BJ (cell line): ENCODE measurements at regions of chr18 and their contacts with region 1.

Region 1: GRCh38 chr18:54127759-54128378 is 96.6 kb downstream of the MBD2 start:
- DNase-seq: no peak
- H3K4me3 ChIP-seq: no peak overlapping the region
- H3K27me3 ChIP-seq: no peaks in the 10 kb centered on the region
- CTCF ChIP-seq: peak; percentile 68

Region 2: GRCh38 chr18:54112356-54112755 is 15.5 kb before region 1 on chr18:
- CTCF ChIA-PET with region 1: interaction called, 19 read pairs
- POLR2A ChIA-PET with region 1: no interaction called
- DNase-seq: peak; percentile 50
- H3K4me3 ChIP-seq: no peak overlapping the region
- H3K27me3 ChIP-seq: no peaks in the 10 kb centered on the region
- CTCF ChIP-seq: no peak

Region 3: DNA sequence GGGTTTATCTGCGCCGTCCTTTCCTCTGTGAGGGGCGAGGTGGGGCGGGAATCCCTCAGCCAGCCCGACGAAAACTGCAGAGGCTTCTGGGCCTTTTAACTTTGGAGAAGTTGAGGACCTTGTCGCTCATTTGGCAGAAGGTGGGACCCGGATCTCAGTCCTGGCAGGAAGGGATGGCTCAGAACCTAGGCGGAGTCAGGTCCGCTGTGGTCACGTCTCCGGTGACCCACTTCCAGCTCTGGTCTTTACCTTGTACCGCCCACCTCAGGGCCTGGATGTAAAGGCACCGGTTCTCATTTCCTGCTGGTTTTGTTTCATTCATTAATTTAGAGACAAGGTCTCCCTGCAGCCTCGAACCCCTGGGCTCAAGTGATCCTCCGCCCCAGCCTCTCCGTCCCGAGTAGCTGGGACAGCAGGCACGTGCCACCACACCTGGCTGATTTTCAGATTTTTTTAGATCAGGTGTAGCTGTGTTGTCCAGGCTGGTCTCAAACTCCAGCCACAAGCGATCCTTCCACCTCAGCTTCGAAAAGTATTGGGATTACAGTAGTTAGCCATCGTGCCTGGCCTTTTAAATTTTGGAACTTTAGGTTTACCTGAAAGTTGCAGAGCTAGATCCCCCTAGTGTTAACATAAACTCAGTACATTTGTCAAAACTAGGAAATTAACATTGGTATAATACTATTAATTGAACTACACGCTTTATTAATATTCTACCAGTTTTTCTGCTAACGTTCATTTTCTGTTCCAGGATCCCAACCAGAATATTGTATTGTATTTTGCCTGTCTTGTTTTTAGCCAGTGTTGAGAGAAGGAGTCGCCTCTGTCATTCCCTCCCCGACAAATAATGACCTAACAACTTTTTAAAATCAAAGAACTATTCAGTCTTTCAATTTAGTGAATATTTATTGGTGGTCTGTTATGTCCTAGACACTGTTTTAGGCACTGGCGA is 142.3 kb after region 1 on chr18:
- CTCF ChIA-PET with region 1: interaction called, 11 read pairs
- POLR2A ChIA-PET with region 1: no interaction called
- DNase-seq: no peak
- H3K4me3 ChIP-seq: peak overlapping the region; percentile 83
- H3K27me3 ChIP-seq: no peaks in the 10 kb centered on the region
- CTCF ChIP-seq: peak; percentile 56